CD8-positive, alpha-beta T cell (primary cell): ENCODE measurements at regions of chr7 and their contacts with region 1.

Region 1: GRCh38 chr7:148698397-148699023 is at the start of gene CUL1:
- DNase-seq: peak; percentile 61 to 93 (median 83)
- ATAC-seq: peak; percentile 79
- H3K4me3 ChIP-seq: peak within 1 kb of the TSS; percentile 66 to 75
- H3K4me3 Mint-ChIP-seq: peak within 1 kb of the TSS; percentile 88
- H3K27ac ChIP-seq: peak within 1 kb of the TSS; percentile 68 to 74
- H3K27ac Mint-ChIP-seq: peak within 1 kb of the TSS; percentile 92
- H3K4me1 ChIP-seq: peaks cover 37% of the 10 kb centered on the region
- H3K4me1 Mint-ChIP-seq: peaks cover 49% of the 10 kb centered on the region
- H3K27me3 ChIP-seq: no peaks in the 10 kb centered on the region
- H3K27me3 Mint-ChIP-seq: no peaks in the 10 kb centered on the region
- CTCF ChIP-seq: no peak
- total RNA-seq, gene CUL1: 23.9 to 25.6 TPM

Region 2: GRCh38 chr7:148575640-148576411 is 122.7 kb before region 1 on chr7:
- CTCF ChIA-PET with region 1: interaction called, 6 read pairs
- POLR2A ChIA-PET with region 1: interaction called, 3 read pairs
- intact Hi-C with region 1: loop called in 1 of 2 experiments (anchors 10 kb)
- DNase-seq: peak; percentile 31 to 83 (median 71)
- ATAC-seq: peak; percentile 86
- H3K4me3 ChIP-seq: no peak overlapping the region
- H3K4me3 Mint-ChIP-seq: no peak overlapping the region
- H3K27ac ChIP-seq: no peak overlapping the region
- H3K27ac Mint-ChIP-seq: no peak overlapping the region
- H3K4me1 ChIP-seq: peaks cover 4% of the 10 kb centered on the region
- H3K4me1 Mint-ChIP-seq: peaks cover 2% of the 10 kb centered on the region
- H3K27me3 ChIP-seq: no peaks in the 10 kb centered on the region
- H3K27me3 Mint-ChIP-seq: peaks cover 2% of the 10 kb centered on the region
- CTCF ChIP-seq: peak; percentile 86

Region 3: DNA sequence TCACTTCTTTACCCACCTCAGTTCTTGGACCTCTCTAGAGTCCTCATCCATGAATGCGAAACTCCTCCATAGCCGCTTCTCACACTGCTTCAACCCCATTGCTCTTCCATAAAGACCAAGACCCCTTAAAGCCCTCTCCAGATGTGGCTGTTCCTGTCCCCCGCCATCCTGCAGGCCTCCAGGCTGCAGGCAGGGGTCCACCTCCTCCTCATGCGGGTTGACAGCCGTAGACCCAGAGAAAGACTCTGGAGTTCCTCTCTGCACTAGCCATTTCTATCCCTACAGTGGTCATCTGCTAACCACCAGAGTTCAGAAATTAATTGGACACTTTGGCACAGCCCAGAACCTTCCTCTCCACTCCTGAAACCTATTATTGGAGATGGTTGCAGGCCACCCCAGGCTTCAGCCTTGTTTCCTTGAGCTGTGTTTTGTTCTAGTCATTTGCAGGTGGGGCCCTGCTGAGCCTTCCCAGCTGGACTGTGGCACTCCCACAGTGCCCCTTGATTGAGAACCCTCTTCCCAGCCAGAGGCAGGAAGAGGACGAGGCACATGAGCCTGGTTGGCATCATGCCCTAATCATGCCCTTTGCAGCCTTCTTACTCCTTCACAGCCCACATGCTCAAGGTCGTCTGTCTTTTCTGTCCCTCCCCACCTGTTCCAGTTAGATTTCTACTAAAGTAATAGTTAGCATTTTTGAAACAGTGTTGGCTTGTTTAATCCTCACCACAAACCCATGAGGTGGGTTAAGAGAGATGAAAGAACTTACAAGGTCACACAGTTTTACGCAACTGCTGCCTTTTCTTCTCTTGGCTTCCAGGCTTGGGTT is 24.0 kb after region 1 on chr7:
- CTCF ChIA-PET with region 1: interaction called, 3 read pairs
- POLR2A ChIA-PET with region 1: interaction called, 13 read pairs
- intact Hi-C with region 1: no loop called
- DNase-seq: peak in 2 of 9 experiments; percentile 28 to 53
- ATAC-seq: peak; percentile 71
- H3K4me3 ChIP-seq: no peak overlapping the region
- H3K4me3 Mint-ChIP-seq: peak overlapping the region; percentile 12
- H3K27ac ChIP-seq: no peak overlapping the region
- H3K27ac Mint-ChIP-seq: peak overlapping the region; percentile 66
- H3K4me1 ChIP-seq: peaks cover 75% of the 10 kb centered on the region
- H3K4me1 Mint-ChIP-seq: peaks cover 86% of the 10 kb centered on the region
- H3K27me3 ChIP-seq: no peaks in the 10 kb centered on the region
- H3K27me3 Mint-ChIP-seq: no peaks in the 10 kb centered on the region
- CTCF ChIP-seq: no peak

Region 4: GRCh38 chr7:148773334-148773733 is 74.8 kb after region 1 on chr7:
- CTCF ChIA-PET with region 1: no interaction called
- POLR2A ChIA-PET with region 1: interaction called, 5 read pairs
- intact Hi-C with region 1: loop called (anchors 5 kb)
- DNase-seq: peak; percentile 2 to 76 (median 37)
- ATAC-seq: peak; percentile 90
- H3K4me3 ChIP-seq: no peak overlapping the region
- H3K4me3 Mint-ChIP-seq: peak overlapping the region; percentile 68
- H3K27ac ChIP-seq: peak overlapping the region; percentile 12 to 71
- H3K27ac Mint-ChIP-seq: peak overlapping the region; percentile 89
- H3K4me1 ChIP-seq: peaks cover 20% of the 10 kb centered on the region
- H3K4me1 Mint-ChIP-seq: peaks cover 30% of the 10 kb centered on the region
- H3K27me3 ChIP-seq: no peaks in the 10 kb centered on the region
- H3K27me3 Mint-ChIP-seq: no peaks in the 10 kb centered on the region
- CTCF ChIP-seq: no peak

Region 5: GRCh38 chr7:148862481-148862880 is 164.0 kb after region 1 on chr7:
- CTCF ChIA-PET with region 1: no interaction called
- POLR2A ChIA-PET with region 1: no interaction called
- intact Hi-C with region 1: no loop called
- DNase-seq: no peak
- ATAC-seq: no peak
- H3K4me3 ChIP-seq: no peak overlapping the region
- H3K4me3 Mint-ChIP-seq: no peak overlapping the region
- H3K27ac ChIP-seq: no peak overlapping the region
- H3K27ac Mint-ChIP-seq: no peak overlapping the region
- H3K4me1 ChIP-seq: no peaks in the 10 kb centered on the region
- H3K4me1 Mint-ChIP-seq: peaks cover 17% of the 10 kb centered on the region
- H3K27me3 ChIP-seq: no peaks in the 10 kb centered on the region
- H3K27me3 Mint-ChIP-seq: no peaks in the 10 kb centered on the region
- CTCF ChIP-seq: no peak

Region 6: DNA sequence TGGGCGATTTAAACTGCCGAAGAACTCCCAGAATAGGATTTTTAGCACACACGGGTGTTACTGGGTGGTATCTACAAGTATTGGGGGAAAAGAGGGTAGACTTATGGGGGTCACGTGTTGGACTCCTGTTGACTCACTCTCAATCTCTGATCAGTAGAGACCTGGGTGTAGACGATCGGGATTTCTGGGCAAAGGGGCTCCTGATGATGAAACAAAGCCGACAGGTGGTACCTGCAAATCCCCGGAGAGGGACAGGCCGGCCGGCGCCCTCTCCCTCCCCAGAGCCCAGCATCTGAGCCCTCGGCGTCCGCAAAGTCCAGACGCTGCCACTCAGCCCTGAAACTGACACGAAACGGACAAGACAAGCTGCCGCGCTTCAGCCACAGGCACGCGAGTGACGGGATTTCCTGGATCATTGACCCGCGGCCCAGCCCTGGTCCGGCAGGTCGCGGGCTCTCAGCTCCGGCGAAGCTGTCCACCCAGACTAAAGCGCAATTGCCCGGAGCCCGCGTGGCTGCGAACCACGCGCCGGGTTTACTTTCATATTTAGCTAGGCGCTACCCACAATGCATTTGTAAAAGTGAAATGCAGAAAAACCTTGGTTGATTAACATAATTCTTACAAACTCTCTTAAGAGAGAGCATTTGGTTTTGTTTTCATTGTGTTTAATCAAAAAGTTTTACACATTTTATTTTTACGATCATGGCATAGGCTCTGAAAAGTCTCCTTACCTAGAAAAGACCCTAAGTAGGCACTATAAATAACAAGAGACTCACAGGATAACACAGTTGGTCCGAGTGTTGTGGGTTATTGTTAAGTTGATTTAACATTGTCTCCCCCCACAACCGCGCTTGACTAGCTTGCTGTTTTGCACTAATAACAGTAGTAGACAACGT is 242.4 kb after region 1 on chr7:
- CTCF ChIA-PET with region 1: no interaction called
- POLR2A ChIA-PET with region 1: interaction called, 13 read pairs
- intact Hi-C with region 1: loop called in 1 of 2 experiments (anchors 2 kb)
- DNase-seq: peak; percentile 31 to 87 (median 66)
- ATAC-seq: peak; percentile 65
- H3K4me3 ChIP-seq: peak overlapping the region; percentile 90 to 96
- H3K4me3 Mint-ChIP-seq: peak overlapping the region; percentile 98
- H3K27ac ChIP-seq: peak overlapping the region; percentile 89 to 91
- H3K27ac Mint-ChIP-seq: peak overlapping the region; percentile 98
- H3K4me1 ChIP-seq: peaks cover 9% of the 10 kb centered on the region
- H3K4me1 Mint-ChIP-seq: peaks cover 17% of the 10 kb centered on the region
- H3K27me3 ChIP-seq: no peaks in the 10 kb centered on the region
- H3K27me3 Mint-ChIP-seq: no peaks in the 10 kb centered on the region
- CTCF ChIP-seq: no peak

Region 7: DNA sequence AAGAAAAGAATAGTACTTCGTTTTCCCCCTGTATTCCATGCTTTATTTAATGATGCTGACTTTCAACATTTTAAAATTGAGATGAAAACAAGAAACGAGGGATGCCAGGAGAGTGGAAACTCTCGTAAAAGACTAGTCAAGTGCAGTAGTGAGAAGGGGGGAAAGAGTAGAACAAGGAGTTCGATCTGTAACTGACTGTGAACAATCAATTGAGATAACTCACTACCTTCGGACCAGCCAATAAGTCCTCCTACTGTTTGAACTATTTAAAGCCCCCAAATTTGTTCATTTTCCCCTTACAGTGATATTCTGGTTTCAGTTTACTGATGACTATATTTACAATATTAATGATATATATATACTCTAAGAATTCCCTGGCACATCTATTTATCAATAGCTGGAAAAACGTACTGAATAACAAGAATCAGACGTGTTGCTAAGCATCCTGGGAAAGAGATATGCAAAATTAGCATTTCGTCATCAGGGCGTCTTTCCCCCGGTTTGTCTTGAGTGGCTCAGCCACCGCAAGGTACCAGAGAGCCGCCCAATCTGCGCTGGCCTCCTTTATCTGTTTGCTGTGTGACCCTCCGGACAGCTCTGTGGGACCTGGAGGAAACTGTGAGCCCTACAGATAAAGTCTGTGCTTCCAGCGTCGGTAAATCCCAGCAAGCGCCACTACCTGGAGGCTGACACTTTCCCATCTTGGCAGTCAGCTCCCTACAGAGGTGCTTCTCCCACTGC is 288.7 kb after region 1 on chr7:
- CTCF ChIA-PET with region 1: no interaction called
- POLR2A ChIA-PET with region 1: no interaction called
- intact Hi-C with region 1: loop called (anchors 5 kb)
- DNase-seq: peak; percentile 43 to 93 (median 80)
- ATAC-seq: peak; percentile 76
- H3K4me3 ChIP-seq: peak overlapping the region; percentile 82 to 97
- H3K4me3 Mint-ChIP-seq: peak overlapping the region; percentile 96
- H3K27ac ChIP-seq: peak overlapping the region; percentile 74 to 93
- H3K27ac Mint-ChIP-seq: peak overlapping the region; percentile 96
- H3K4me1 ChIP-seq: peaks cover 41% of the 10 kb centered on the region
- H3K4me1 Mint-ChIP-seq: peaks cover 52% of the 10 kb centered on the region
- H3K27me3 ChIP-seq: no peaks in the 10 kb centered on the region
- H3K27me3 Mint-ChIP-seq: no peaks in the 10 kb centered on the region
- CTCF ChIP-seq: no peak

Region 8: GRCh38 chr7:149090397-149091195 is 392.1 kb after region 1 on chr7 and contains the start of gene ZNF786:
- CTCF ChIA-PET with region 1: no interaction called
- POLR2A ChIA-PET with region 1: no interaction called
- intact Hi-C with region 1: loop called (anchors 2 to 5 kb)
- DNase-seq: peak; percentile 86 to 97 (median 93)
- ATAC-seq: peak; percentile 85
- H3K4me3 ChIP-seq: peak within 1 kb of the TSS; percentile 83 to 98
- H3K4me3 Mint-ChIP-seq: peak within 1 kb of the TSS; percentile 99
- H3K27ac ChIP-seq: peak within 1 kb of the TSS; percentile 90 to 95
- H3K27ac Mint-ChIP-seq: peak within 1 kb of the TSS; percentile 100
- H3K4me1 ChIP-seq: peaks cover 31% of the 10 kb centered on the region
- H3K4me1 Mint-ChIP-seq: peaks cover 27% of the 10 kb centered on the region
- H3K27me3 ChIP-seq: no peaks in the 10 kb centered on the region
- H3K27me3 Mint-ChIP-seq: no peaks in the 10 kb centered on the region
- CTCF ChIP-seq: peak; percentile 90
- total RNA-seq, gene ZNF786: 4.7 to 5.7 TPM